Activated T-helper 2 cell treated with anti-CD3 and anti-CD28 coated beads, Interferon-gamma antibody, Interleukin-2, Interleukin-4, amounts not matched to agents 10 μg/mL and 5 μg/mL and 100 μg/mL, durations not matched to agents 14 hours and 24 hours and 36 hours (primary cell): ENCODE measurements at regions of chr12 and their contacts with region 1.

Region 1: DNA sequence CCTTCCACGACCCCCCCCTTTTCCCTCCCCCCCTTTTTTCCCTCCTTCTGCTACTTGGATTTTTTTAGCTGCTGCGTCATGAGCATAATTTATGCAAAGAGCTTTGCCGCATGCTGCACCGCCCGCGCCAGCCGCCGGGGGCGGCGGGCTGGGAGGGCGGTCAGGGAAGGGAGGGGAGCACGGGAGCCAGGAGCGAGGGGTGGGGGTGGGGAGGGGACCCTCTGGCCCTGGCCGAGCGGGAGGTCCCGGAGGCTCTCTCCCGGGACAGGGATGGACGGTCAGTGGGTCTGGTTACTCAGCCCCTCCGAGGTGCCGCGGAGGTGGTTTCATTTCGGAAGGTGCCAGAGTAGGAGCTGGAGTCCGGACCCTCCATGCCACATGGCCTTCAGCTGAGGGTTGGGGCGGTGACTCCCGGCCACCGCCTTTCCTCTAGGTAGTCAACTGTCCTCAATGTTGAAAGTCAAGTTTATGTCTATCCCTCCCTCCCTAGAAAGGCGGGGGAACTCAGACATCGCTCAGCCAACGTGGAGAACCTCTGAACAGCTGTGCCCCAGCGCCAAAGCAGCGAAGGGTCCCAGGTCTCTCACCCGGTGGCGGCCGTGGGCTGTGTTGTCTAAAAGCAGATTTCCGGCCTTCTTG is at the start of gene POU6F1:
- DNase-seq: peak; percentile 57
- H3K4me3 Mint-ChIP-seq: peak within 1 kb of the TSS; percentile 71
- H3K27ac Mint-ChIP-seq: peak within 1 kb of the TSS; percentile 71
- H3K4me1 Mint-ChIP-seq: peaks cover 13% of the 10 kb centered on the region
- H3K27me3 Mint-ChIP-seq: no peaks in the 10 kb centered on the region
- total RNA-seq, gene POU6F1: 4.9 and 5.5 TPM in 2 replicates

Region 2: GRCh38 chr12:51172515-51173431 is 45.3 kb before region 1 on chr12 and contains the start of gene TFCP2:
- intact Hi-C with region 1: loop called (anchors 2 kb)
- DNase-seq: peak; percentile 93
- H3K4me3 Mint-ChIP-seq: peak within 1 kb of the TSS; percentile 80
- H3K27ac Mint-ChIP-seq: peak within 1 kb of the TSS; percentile 71
- H3K4me1 Mint-ChIP-seq: peaks cover 10% of the 10 kb centered on the region
- H3K27me3 Mint-ChIP-seq: no peaks in the 10 kb centered on the region
- total RNA-seq, gene TFCP2: 42.2 and 44.2 TPM in 2 replicates

Region 3: DNA sequence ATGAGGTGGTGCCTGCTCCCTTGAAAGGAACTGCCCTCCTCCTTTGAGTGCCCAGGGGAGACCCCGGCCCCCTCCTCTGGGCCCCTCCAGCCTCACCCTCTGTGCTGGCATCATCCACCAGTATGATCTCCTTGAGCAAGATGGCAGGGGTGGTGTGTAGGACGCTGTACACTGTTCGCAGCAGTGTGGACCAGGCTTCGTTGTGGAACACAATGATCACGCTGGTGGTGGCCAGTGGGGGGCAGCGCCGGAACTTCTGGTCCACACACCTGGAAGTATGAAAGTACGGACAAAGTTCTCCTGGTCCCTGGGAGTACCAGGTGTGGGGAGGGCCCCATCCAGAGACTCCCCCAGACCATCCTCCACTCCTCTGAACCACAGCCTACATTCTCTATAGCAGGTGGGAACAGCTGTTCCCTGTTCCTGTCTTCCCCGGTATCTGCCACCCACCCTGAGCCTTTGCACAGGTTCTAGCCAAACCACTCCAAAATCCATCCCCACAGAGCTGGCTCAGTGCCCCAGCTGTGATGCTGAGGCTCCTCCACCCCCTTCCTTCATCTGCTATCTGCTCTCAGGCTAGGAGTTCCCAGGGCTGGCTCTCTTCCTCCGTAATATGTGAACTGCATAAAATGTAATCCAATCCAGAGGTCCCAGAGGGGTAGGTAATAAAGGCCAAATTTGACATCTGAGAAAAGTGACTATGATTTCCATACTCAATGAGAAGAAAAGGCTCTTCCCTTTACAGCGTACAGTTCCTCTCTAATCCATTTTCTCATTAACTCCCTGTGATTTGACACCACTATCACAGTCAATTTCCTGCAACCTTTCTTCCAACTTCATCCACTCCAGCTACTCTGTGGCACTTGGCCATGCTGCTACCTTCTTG is 159.3 kb after region 1 on chr12:
- intact Hi-C with region 1: no loop called
- DNase-seq: no peak
- H3K4me3 Mint-ChIP-seq: no peak overlapping the region
- H3K27ac Mint-ChIP-seq: no peak overlapping the region
- H3K4me1 Mint-ChIP-seq: peaks cover 28% of the 10 kb centered on the region
- H3K27me3 Mint-ChIP-seq: no peaks in the 10 kb centered on the region